ENCODE measurements at regions of chr1 and their contacts with region 1.

Region 1: GRCh38 chr1:77888081-77888780 is at the start of gene NEXN:
- DNase-seq: peak; percentile 84
- H3K4me3 ChIP-seq: peak within 1 kb of the TSS; percentile 70 to 90
- H3K27ac ChIP-seq: peak within 1 kb of the TSS; percentile 55 to 89
- H3K4me1 ChIP-seq: peaks cover 3% of the 10 kb centered on the region in 2 experiments; a peak in 3 of 4 replicates
- H3K27me3 ChIP-seq: no peaks in the 10 kb centered on the region
- CTCF ChIP-seq: no peak
- EP300 ChIP-seq: peak in 1 of 2 experiments; percentile 44; a peak in 1 of 4 replicates
- RAD21 ChIP-seq: no peak
- polyA plus RNA-seq, gene NEXN: 3.6 and 4.1 TPM in 2 replicates

Region 2: DNA sequence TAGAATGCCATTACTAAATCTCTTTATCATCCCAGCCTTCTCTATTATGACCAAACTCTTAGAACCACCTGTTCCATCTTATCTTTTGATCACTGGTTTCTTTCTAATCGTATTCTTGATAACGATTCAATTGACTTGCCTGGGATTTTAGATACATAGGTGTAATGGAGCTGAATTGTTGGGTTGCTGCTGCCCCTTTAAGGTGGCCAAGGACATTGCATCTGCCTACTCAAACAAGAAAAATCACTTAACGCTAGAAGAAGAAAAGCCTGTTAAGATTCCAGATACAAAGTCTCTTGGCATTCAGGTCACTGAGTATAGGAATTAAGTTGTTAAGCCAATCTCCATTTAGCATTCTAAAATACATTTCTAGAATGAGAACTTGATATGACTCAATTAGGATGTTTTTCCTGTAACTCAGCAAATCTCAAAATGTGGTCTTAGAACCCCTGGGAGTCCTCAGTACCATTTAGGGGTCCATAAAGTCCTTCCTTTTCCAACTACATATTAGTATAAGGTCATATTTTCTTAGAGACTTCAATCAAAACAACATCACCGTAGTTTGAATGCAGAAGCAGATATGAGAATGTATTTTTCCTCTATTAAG is 12.6 kb after region 1 on chr1:
- CTCF ChIA-PET with region 1: interaction called, 13 read pairs
- POLR2A ChIA-PET with region 1: no interaction called
- DNase-seq: peak; percentile 43
- H3K4me3 ChIP-seq: no peak overlapping the region
- H3K27ac ChIP-seq: no peak overlapping the region
- H3K4me1 ChIP-seq: 0 out of 4 replicates have a peak, but pooled peaks cover 0 to 5% of the 10 kb centered on the region in 2 experiments
- H3K27me3 ChIP-seq: no peaks in the 10 kb centered on the region
- CTCF ChIP-seq: peak; percentile 85
- EP300 ChIP-seq: no peak
- RAD21 ChIP-seq: peak; percentile 86

Measured in SK-N-SH (cell line).